ENCODE measurements at regions of chr2 and their contacts with region 1.

Region 1: GRCh38 chr2:10846110-10846861 is 33.7 kb upstream of the PDIA6 start:
- DNase-seq: peak; percentile 17
- H3K4me3 ChIP-seq: no peak overlapping the region
- H3K27ac ChIP-seq: peak overlapping the region; percentile 42 to 52
- H3K4me1 ChIP-seq: no peaks in the 10 kb centered on the region
- H3K27me3 ChIP-seq: no peaks in the 10 kb centered on the region
- CTCF ChIP-seq: no peak
- POLR2A ChIP-seq: no peak

Region 2: DNA sequence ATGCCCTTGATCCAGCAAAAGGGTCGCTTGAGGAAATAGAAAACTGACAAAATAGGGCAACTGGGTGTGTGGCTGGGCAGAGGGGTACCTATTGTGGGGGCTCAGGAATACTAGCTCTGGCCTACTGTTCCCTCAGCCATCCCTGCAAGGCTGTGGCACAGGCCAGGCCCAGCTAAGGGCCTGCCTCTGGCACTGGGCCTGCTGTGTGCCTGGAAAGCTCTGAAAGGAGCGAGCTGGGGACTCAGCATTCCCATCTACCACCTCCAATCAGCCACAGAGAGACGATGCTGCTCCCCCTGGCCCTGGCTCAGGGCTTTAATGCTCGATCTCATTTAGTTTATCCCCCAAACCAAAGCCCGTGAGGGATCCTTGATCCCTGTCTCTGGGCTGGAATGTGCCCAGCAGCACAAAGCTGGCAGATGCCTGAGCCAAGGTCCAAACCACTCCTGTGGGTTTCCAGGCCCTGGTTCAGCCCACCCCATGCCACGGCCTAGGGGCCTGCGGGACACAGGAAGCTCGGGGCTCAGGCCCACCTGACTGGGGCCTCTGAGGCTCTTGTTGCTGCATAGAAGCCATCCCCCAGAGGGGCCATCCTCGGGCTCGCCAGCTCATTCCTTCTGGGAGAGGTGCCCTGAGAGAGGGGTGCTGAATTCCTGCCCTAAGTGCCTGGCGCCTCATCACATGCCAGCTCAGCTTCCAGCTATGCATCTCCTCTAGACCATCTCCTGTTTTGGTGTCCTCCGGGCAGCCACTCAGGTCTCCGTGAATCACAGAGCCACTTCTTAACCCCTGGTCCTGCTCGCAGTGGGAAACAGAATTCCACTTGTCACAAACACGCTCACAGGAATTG is 22.4 kb after region 1 on chr2:
- intact Hi-C with region 1: loop called (anchors 2 kb)
- DNase-seq: no peak
- H3K4me3 ChIP-seq: no peak overlapping the region
- H3K27ac ChIP-seq: no peak overlapping the region
- H3K4me1 ChIP-seq: no peaks in the 10 kb centered on the region
- H3K27me3 ChIP-seq: no peaks in the 10 kb centered on the region
- CTCF ChIP-seq: no peak
- POLR2A ChIP-seq: no peak

Region 3: GRCh38 chr2:11056614-11057013 is 210.3 kb after region 1 on chr2:
- intact Hi-C with region 1: no loop called
- DNase-seq: no peak
- H3K4me3 ChIP-seq: no peak overlapping the region
- H3K27ac ChIP-seq: no peak overlapping the region
- H3K4me1 ChIP-seq: no peaks in the 10 kb centered on the region
- H3K27me3 ChIP-seq: no peaks in the 10 kb centered on the region
- CTCF ChIP-seq: no peak
- POLR2A ChIP-seq: no peak